ENCODE measurements at regions of chr2 and their contacts with region 1.

Region 1: GRCh38 chr2:25362049-25362433 is 20.3 kb upstream of the DNMT3A start:
- DNase-seq: peak; percentile 96
- H3K4me3 Mint-ChIP-seq: peak overlapping the region; percentile 75
- H3K27ac Mint-ChIP-seq: peak overlapping the region; percentile 85
- H3K4me1 Mint-ChIP-seq: peaks cover 18% of the 10 kb centered on the region
- H3K27me3 Mint-ChIP-seq: peaks cover 15% of the 10 kb centered on the region

Region 2: GRCh38 chr2:25032094-25032493 is 329.9 kb before region 1 on chr2:
- CTCF ChIA-PET with region 1: no interaction called
- DNase-seq: no peak
- H3K4me3 Mint-ChIP-seq: no peak overlapping the region
- H3K27ac Mint-ChIP-seq: no peak overlapping the region
- H3K4me1 Mint-ChIP-seq: no peaks in the 10 kb centered on the region
- H3K27me3 Mint-ChIP-seq: peaks cover 16% of the 10 kb centered on the region

Region 3: GRCh38 chr2:25276569-25277465 is 85.2 kb before region 1 on chr2:
- CTCF ChIA-PET with region 1: interaction called, 12 read pairs
- DNase-seq: peak; percentile 82
- H3K4me3 Mint-ChIP-seq: peak overlapping the region; percentile 49
- H3K27ac Mint-ChIP-seq: peak overlapping the region; percentile 97
- H3K4me1 Mint-ChIP-seq: peaks cover 86% of the 10 kb centered on the region
- H3K27me3 Mint-ChIP-seq: no peaks in the 10 kb centered on the region

Region 4: GRCh38 chr2:25314514-25315315 is 47.3 kb before region 1 on chr2:
- CTCF ChIA-PET with region 1: interaction called, 11 read pairs
- DNase-seq: peak; percentile 88
- H3K4me3 Mint-ChIP-seq: peak overlapping the region; percentile 77
- H3K27ac Mint-ChIP-seq: peak overlapping the region; percentile 96
- H3K4me1 Mint-ChIP-seq: peaks cover 75% of the 10 kb centered on the region
- H3K27me3 Mint-ChIP-seq: no peaks in the 10 kb centered on the region

Region 5: GRCh38 chr2:25376750-25377621 is 14.9 kb after region 1 on chr2:
- CTCF ChIA-PET with region 1: interaction called, 40 read pairs
- DNase-seq: peak; percentile 94
- H3K4me3 Mint-ChIP-seq: peak overlapping the region; percentile 65
- H3K27ac Mint-ChIP-seq: peak overlapping the region; percentile 100
- H3K4me1 Mint-ChIP-seq: peaks cover 42% of the 10 kb centered on the region
- H3K27me3 Mint-ChIP-seq: no peaks in the 10 kb centered on the region

Region 6: GRCh38 chr2:25453199-25453905 is 91.3 kb after region 1 on chr2:
- CTCF ChIA-PET with region 1: interaction called, 10 read pairs
- DNase-seq: peak; percentile 39
- H3K4me3 Mint-ChIP-seq: peak overlapping the region; percentile 15
- H3K27ac Mint-ChIP-seq: peak overlapping the region; percentile 95
- H3K4me1 Mint-ChIP-seq: peaks cover 30% of the 10 kb centered on the region
- H3K27me3 Mint-ChIP-seq: no peaks in the 10 kb centered on the region

Region 7: DNA sequence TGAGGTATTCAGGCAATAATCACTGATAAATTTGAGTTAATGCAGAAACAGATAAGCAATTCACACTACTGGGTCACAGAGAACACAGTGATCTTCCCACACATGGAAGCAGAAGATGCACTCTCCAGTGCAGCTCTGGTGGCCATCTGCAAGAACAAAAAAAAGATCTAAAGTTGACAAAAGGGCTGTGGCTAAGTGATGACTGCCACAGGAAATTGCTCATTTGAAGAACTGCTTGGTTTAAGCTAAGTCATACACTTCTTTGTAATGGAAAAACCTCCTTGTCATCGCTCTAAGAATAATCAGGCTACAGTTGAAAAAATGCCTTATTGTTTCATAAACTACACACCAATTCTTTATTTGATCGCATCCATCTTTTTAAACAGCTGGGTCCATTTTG is 196.2 kb after region 1 on chr2:
- CTCF ChIA-PET with region 1: interaction called, 12 read pairs
- DNase-seq: peak; percentile 61
- H3K4me3 Mint-ChIP-seq: no peak overlapping the region
- H3K27ac Mint-ChIP-seq: peak overlapping the region; percentile 85
- H3K4me1 Mint-ChIP-seq: peaks cover 35% of the 10 kb centered on the region
- H3K27me3 Mint-ChIP-seq: no peaks in the 10 kb centered on the region

Region 8: DNA sequence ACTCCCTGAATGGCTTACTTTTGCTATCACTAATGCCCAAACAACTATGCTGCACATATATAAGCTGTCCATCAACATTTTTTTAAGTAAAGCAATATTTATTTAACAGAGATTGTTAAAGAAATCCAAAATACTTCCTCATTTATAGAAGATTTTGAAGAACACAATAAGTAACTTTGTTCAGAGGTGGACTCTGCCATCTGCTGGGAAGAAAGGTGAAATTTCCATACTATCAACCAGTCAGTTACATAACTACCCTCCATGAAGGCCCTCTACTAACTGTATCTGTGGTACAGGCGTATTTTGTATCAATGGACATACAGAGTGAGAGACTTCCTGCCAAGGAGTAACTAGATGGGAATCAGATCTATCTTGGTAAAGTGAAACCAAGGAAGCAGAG is 205.4 kb after region 1 on chr2:
- CTCF ChIA-PET with region 1: interaction called, 16 read pairs
- DNase-seq: peak; percentile 36
- H3K4me3 Mint-ChIP-seq: no peak overlapping the region
- H3K27ac Mint-ChIP-seq: no peak overlapping the region
- H3K4me1 Mint-ChIP-seq: peaks cover 8% of the 10 kb centered on the region
- H3K27me3 Mint-ChIP-seq: no peaks in the 10 kb centered on the region

Measured in activated naive CD4-positive, alpha-beta T cell treated with anti-CD3 and anti-CD28 coated beads, Interleukin-2, amount 10 ng/mL, durations not matched to agents 7 days and 5 days (primary cell).